OCI-LY7 (cell line): ENCODE measurements at regions of chr17 and their contacts with region 1.

Region 1: GRCh38 chr17:76336756-76337412 is 16.8 kb downstream of the PRPSAP1 start:
- DNase-seq: no peak
- H3K4me3 ChIP-seq: no peak overlapping the region
- H3K27ac ChIP-seq: no peak overlapping the region
- H3K4me1 ChIP-seq: no peaks in the 10 kb centered on the region
- CTCF ChIP-seq: no peak

Region 2: DNA sequence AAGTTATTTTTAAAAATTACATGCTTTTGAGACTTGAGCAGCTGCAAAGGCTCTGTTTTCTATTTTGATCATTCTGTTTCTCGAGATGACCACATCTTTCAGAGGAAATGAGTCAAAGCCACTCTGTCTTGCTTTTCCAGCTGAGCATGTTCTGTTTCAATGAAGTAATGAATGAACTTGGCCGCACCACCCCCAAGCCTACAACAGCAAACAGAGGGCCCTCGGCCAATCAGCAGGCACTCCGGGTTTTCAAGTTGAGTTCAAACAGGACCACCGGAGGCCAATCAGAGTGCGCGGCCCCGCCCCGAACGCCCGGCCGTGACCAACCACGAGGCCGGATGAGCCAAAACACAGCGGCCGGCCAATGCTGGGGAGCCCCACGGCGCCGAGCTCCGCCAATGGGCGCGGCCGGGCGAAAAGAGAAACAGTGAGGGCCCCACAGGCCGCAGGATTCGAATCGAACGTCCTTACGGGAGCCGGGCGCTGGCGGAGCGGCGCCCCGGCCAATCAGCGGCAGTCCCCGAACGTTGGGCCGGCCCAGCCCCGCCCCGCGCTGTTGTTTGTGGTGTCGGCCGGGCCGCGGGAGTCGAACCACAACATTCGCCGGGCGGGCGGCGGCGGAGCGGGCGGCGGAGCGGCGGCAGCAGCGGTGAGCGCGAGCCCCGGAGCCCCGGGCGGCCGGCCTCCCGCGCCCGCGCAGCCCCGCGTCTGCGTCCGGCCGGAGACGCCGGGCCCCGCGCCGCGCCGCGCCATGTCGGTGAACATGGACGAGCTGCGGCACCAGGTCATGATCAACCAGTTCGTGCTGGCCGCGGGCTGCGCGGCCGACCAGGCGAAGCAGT is 71.9 kb before region 1 on chr17 and contains the start of gene UBALD2:
- CTCF ChIA-PET with region 1: no interaction called
- POLR2A ChIA-PET with region 1: no interaction called
- intact Hi-C with region 1: no loop called
- DNase-seq: peak; percentile 100
- H3K4me3 ChIP-seq: peak within 1 kb of the TSS; percentile 89
- H3K27ac ChIP-seq: peak within 1 kb of the TSS; percentile 90
- H3K4me1 ChIP-seq: peaks cover 83% of the 10 kb centered on the region
- CTCF ChIP-seq: no peak
- total RNA-seq, gene UBALD2: 70.9 and 86.4 TPM in 2 replicates

Region 3: GRCh38 chr17:76359375-76359774 is 22.5 kb after region 1 on chr17:
- CTCF ChIA-PET with region 1: interaction called, 3 read pairs
- POLR2A ChIA-PET with region 1: interaction called, 10 read pairs
- intact Hi-C with region 1: no loop called
- DNase-seq: no peak
- H3K4me3 ChIP-seq: no peak overlapping the region
- H3K27ac ChIP-seq: no peak overlapping the region
- H3K4me1 ChIP-seq: peaks cover 35% of the 10 kb centered on the region
- CTCF ChIP-seq: no peak

Region 4: GRCh38 chr17:76388966-76389888 is 52.3 kb after region 1 on chr17:
- CTCF ChIA-PET with region 1: no interaction called
- POLR2A ChIA-PET with region 1: no interaction called
- intact Hi-C with region 1: no loop called
- DNase-seq: no peak
- H3K4me3 ChIP-seq: no peak overlapping the region
- H3K27ac ChIP-seq: no peak overlapping the region
- H3K4me1 ChIP-seq: peaks cover 19% of the 10 kb centered on the region
- CTCF ChIP-seq: peak; percentile 42; the same call in 1 of the 2 replicates

Region 5: DNA sequence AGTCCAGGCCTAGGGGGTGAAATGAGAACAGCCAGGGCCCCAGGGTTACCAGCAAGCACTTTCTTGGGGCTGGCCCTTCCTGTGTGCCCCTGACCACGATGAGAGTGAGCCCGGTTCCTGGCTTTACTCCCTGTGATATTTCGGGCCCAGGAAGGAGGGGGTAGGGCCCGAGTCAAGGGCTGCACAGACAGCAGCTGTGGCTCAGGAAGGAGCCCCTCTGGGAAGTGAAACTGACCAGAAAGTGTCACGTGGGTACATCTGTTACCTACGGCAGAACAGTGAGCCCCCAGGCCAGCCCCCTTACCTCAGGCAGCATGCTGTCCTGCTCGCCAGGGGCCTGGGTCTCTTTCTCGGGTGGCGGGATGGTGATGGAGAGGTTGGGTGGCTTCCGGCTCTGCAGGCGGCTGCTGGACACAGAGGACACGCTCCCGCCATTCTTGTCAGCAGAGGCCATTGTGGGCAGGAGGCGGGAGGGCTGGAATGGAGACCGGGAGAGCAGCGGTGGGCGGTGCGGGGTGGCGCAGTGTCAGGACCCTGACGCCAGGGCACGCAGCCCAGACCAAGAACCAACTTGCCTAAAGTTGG is 144.3 kb after region 1 on chr17:
- CTCF ChIA-PET with region 1: no interaction called
- POLR2A ChIA-PET with region 1: no interaction called
- intact Hi-C with region 1: no loop called
- DNase-seq: peak; percentile 98
- H3K4me3 ChIP-seq: peak overlapping the region; percentile 67
- H3K27ac ChIP-seq: peak overlapping the region; percentile 95
- H3K4me1 ChIP-seq: peaks cover 84% of the 10 kb centered on the region
- CTCF ChIP-seq: no peak

Region 6: GRCh38 chr17:76562734-76563148 is 225.9 kb after region 1 on chr17:
- CTCF ChIA-PET with region 1: no interaction called
- POLR2A ChIA-PET with region 1: no interaction called
- intact Hi-C with region 1: no loop called
- DNase-seq: no peak
- H3K4me3 ChIP-seq: no peak overlapping the region
- H3K27ac ChIP-seq: no peak overlapping the region
- H3K4me1 ChIP-seq: peaks cover 60% of the 10 kb centered on the region
- CTCF ChIP-seq: no peak